Right cardiac atrium (tissue), 5 donors: ENCODE measurements at regions of chr7 and their contacts with region 1.

Region 1: DNA sequence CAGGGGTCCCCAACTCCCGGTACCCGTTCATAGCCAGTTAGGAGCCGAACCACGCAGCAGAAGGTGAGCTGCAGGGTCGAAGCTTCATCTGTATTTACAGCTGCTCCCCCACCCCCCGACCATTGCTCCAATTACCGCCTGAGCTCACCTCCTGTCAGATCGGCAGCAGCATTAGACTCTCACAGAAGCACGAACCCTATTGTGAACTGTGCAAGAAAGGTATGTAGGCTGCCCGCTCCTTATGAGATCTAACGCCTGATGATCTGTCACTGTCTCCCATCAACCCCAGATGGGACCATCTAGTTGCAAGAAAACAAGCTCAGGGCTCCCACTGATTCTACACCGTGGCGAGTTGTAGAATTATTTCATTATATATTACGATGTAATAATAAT is 14.6 kb upstream of the AZGP1 start:
- DNase-seq: no peak
- ATAC-seq: no peak
- H3K4me3 ChIP-seq: no peak overlapping the region
- H3K27ac ChIP-seq: no peak overlapping the region
- H3K4me1 ChIP-seq: no peaks in the 10 kb centered on the region
- H3K27me3 ChIP-seq: no peaks in the 10 kb centered on the region

Region 2: DNA sequence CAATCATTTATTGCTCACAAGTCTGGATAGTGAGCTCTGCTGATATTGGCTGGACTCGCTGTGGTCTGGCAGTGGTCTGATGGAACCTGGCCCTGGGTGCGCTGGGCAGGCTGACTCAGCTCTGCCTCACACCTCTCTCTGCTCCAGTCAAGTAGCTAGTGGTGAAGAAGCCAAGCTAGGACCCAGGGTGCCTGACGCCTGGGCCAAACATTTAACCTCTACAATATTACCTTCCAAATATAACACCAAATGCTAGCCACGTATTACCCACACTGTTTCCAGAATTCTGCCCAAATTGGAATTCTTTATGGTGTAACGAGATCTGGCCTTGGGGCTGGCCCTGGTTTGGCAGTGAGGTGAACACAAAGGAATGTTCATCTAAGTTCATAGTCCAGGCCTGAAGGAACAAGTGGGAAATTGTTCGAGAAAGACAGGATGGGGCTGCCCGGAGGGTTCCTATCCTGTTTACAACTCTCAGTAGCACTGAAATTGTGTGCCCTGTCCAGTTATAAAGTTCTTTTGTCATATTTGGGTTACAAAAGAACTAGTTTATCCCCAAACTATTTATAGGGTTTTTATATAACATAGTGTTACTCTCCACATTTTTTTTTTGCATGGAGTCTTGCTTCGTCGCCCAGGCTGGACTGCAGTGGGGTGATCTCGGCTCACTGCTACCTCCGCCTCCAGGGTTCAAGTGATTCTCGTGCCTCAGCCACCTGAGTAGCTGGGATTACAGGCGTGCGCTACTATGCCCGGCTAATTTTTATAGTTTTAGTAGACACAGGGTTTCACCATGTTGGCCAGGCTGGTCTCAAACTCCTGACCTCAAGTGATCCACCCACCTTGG is 130.0 kb before region 1 on chr7:
- intact Hi-C with region 1: no loop called
- DNase-seq: peak; percentile 51 to 75 (median 60)
- ATAC-seq: peak; percentile 94
- H3K4me3 ChIP-seq: no peak overlapping the region
- H3K27ac ChIP-seq: peak overlapping the region; percentile 12
- H3K4me1 ChIP-seq: no peaks in the 10 kb centered on the region
- H3K27me3 ChIP-seq: no peaks in the 10 kb centered on the region

Region 3: DNA sequence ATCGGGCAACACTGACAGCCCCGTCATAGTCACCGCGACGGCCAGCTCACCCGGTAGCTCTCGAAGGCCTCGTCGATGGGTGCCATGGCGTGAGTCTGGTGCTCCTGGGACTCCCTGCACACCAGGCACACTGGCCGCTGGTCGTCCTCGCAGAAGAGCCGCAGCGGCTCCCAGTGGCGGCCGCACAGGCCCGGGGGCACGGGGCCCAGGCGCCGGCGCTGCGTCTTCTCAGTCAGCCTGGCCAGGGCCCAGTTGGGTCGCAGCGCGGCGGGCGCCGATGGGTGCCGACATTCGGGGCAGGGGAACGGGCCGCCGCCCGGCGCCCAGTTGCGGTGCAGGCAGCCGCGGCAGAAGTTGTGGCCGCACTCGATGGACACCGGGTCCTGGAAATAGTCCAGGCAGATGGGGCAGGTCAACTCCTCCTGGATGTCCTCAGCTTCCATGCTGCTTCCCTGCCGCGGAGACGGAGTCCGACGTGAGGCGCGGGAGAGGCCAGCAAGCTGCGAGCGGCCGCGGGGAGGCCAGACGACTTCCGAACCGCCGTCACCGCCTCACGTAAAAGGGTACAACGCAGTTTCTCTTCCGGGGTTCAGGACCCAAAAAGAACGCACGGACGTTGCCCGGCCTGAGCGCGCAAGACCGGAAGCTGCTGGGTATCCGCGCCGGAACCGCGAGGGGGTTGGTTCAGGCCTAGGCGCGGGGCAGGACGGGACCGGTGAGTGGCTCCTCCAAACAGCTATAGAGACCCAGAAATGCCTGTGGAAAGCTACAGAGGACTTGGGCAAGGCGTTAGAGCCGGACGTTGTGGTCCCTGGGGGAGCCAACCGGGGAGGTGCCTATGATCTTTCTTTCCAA is 71.3 kb before region 1 on chr7 and contains the start of gene TRIM4:
- intact Hi-C with region 1: loop called in 2 of 4 experiments (anchors 5 kb)
- DNase-seq: peak; percentile 94 to 97 (median 96)
- ATAC-seq: peak; percentile 100
- H3K4me3 ChIP-seq: peak within 1 kb of the TSS; percentile 66
- H3K27ac ChIP-seq: peak within 1 kb of the TSS; percentile 86
- H3K4me1 ChIP-seq: peaks cover 7% of the 10 kb centered on the region
- H3K27me3 ChIP-seq: no peaks in the 10 kb centered on the region
- total RNA-seq, gene TRIM4: 8.8 to 11.2 (median 10.0) TPM

Region 4: GRCh38 chr7:100022665-100023064 is 32.2 kb after region 1 on chr7:
- intact Hi-C with region 1: no loop called
- DNase-seq: no peak
- ATAC-seq: peak in 1 of 2 donors; percentile 47
- H3K4me3 ChIP-seq: no peak overlapping the region
- H3K27ac ChIP-seq: no peak overlapping the region
- H3K4me1 ChIP-seq: no peaks in the 10 kb centered on the region
- H3K27me3 ChIP-seq: no peaks in the 10 kb centered on the region

Region 5: DNA sequence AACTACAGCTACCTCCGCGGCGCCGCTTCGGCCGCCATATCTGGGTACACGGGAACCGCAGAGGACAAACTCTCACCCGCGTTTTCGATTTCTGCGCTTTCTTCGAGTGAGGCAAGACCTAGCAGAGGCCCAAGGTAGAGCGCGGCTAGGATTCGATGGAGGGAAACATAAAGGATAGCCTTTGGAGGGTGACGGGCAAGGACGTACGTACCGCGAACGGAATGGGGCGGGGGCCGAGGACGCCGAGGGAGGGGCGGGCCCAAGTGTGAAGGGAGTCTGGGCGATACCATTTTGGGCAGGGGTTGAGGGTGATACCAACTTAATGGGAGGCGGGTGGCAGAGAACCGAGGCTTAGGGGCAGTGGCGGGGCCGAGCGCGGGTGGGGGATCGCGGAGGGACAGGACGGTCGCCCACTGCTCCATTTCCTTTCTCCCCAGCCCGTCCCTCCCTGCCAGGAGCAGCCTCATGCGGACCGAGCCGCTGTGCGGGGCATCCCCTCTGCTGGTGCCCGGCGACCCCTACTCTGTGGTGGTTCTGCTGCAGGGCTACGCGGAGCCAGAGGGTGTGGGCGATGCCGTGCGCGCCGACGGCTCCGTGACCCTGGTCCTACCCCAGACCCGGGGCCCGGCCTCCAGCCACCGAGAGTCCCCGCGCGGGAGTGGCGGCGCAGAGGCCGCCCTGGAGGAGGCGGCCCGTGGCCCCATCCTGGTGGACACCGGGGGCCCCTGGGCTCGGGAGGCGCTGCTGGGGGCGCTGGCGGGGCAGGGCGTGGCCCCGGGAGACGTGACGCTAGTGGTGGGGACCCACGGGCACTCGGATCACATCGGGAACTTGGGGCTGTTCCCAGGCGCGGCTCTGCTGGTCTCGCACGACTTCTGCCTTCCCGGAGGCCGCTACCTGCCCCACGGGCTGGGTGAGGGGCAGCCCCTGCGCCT is 136.7 kb after region 1 on chr7 and contains the start of gene MBLAC1:
- intact Hi-C with region 1: loop called in 1 of 4 experiments (anchors 5 kb)
- DNase-seq: peak; percentile 91 to 95 (median 93)
- ATAC-seq: peak; percentile 95
- H3K4me3 ChIP-seq: peak within 1 kb of the TSS; percentile 84
- H3K27ac ChIP-seq: peak within 1 kb of the TSS; percentile 99
- H3K4me1 ChIP-seq: no peaks in the 10 kb centered on the region
- H3K27me3 ChIP-seq: no peaks in the 10 kb centered on the region
- total RNA-seq, gene MBLAC1: 3.0 to 4.4 (median 3.5) TPM